Endothelial cell of umbilical vein (primary cell): ENCODE measurements at regions of chr7 and their contacts with region 1.

Region 1: DNA sequence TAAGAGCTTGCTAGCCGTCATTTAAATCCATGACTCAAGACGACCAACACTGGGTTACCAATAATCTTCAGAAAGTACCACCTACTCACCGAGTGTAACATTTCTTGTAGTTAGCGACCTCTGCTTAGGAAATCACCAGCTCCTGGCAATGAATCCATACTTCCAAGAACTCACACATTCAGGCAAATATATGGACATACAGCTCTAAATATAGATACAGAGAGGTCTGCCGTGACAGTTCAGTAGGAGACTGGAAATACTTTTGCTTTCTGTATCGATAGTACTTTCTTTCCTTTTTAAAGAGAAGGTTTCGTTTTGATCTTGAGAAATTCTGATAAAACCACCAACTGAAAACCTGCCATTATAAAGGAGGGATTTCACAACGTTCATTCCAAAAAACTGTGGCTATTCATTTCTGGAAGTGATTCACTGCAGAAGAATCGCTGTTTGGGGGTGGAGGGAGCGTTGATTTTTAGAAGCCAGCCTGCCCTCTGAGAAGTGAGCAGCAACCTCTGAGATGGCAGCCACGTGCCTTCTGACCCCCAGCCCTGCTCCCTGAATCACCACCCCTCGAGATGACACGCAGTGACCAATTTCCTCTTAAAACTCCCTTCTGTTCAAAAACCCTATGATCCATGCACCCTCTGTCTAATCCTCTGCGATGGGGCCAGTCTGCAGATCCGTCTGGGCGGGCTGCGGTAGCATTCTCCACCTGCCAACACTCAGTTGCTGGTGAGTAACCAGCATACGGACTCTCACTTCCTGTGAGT is 179.0 kb upstream of the KLF14 start:
- DNase-seq: peak; percentile 97
- H3K4me3 ChIP-seq: peak overlapping the region; percentile 51 to 99 (median 88)
- H3K27ac ChIP-seq: peak overlapping the region; percentile 100
- H3K4me1 ChIP-seq: peaks cover 60% of the 10 kb centered on the region
- H3K27me3 ChIP-seq: no peaks in the 10 kb centered on the region
- CTCF ChIP-seq: no peak
- POLR2A ChIP-seq: peak; percentile 48

Region 2: DNA sequence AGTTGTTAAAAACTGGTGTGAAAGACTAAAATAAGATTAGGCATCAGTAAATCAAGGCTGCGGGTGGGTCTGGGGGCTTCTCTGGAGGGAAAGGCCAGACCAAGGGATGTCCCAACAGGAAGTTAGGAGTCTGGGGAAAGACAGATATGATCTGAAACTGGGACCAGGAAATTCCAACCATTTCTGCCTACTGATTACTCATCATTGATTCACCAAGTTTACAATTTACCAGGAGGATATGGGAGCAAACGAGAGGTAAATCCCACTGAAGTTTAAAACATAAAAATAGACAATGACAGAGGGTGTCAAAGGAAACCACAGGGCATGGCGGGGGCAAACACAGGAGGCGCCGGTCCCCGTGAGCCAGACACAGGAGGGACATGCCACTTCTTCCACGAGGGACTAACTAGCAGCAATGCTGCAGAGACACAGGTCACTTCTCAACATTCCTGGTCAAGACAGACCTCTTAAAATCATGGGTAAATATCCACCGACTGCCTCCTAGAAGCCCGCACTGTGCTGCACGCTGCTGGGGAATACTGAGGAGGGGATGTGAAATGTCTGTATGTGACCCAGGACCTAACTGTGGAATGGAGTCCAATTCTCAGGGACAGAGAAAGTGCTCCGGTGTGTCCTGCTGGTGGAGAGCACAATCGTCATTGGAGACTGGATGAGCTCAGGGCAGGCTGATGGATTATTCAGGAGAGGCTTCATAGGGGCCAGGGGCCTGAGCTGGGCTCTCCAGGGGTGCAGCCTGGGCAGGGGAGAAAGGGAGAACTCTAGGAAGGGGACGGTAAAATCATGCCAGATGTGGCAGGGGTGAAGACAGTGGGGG is 25.6 kb before region 1 on chr7:
- CTCF ChIA-PET with region 1: no interaction called
- POLR2A ChIA-PET with region 1: interaction called, 4 read pairs
- dilution Hi-C with region 1: no loop called
- intact Hi-C with region 1: loop called (anchors 1 kb)
- DNase-seq: peak; percentile 89
- H3K4me3 ChIP-seq: no peak overlapping the region
- H3K27ac ChIP-seq: peak overlapping the region; percentile 98
- H3K4me1 ChIP-seq: peaks cover 74% of the 10 kb centered on the region
- H3K27me3 ChIP-seq: no peaks in the 10 kb centered on the region
- CTCF ChIP-seq: no peak
- POLR2A ChIP-seq: peak; percentile 72

Region 3: GRCh38 chr7:130941322-130942210 is 28.5 kb after region 1 on chr7:
- CTCF ChIA-PET with region 1: interaction called, 5 read pairs
- POLR2A ChIA-PET with region 1: interaction called, 4 read pairs
- dilution Hi-C with region 1: no loop called
- intact Hi-C with region 1: loop called (anchors 1 kb)
- DNase-seq: peak; percentile 55
- H3K4me3 ChIP-seq: peak overlapping the region; percentile 6 to 29 (median 25)
- H3K27ac ChIP-seq: peak overlapping the region; percentile 14
- H3K4me1 ChIP-seq: peaks cover 13% of the 10 kb centered on the region
- H3K27me3 ChIP-seq: no peaks in the 10 kb centered on the region
- CTCF ChIP-seq: no peak
- POLR2A ChIP-seq: no peak

Region 4: GRCh38 chr7:130961128-130961601 is 48.1 kb after region 1 on chr7:
- CTCF ChIA-PET with region 1: interaction called, 7 read pairs
- POLR2A ChIA-PET with region 1: interaction called, 5 read pairs
- dilution Hi-C with region 1: no loop called
- intact Hi-C with region 1: loop called (anchors 1 kb)
- DNase-seq: no peak
- H3K4me3 ChIP-seq: no peak overlapping the region
- H3K27ac ChIP-seq: peak overlapping the region; percentile 42
- H3K4me1 ChIP-seq: peaks cover 21% of the 10 kb centered on the region
- H3K27me3 ChIP-seq: no peaks in the 10 kb centered on the region
- CTCF ChIP-seq: no peak
- POLR2A ChIP-seq: no peak

Region 5: GRCh38 chr7:131007394-131008330 is 94.6 kb after region 1 on chr7:
- CTCF ChIA-PET with region 1: interaction called, 7 read pairs
- POLR2A ChIA-PET with region 1: no interaction called
- dilution Hi-C with region 1: no loop called
- intact Hi-C with region 1: loop called (anchors 1 kb)
- DNase-seq: peak; percentile 71
- H3K4me3 ChIP-seq: no peak overlapping the region
- H3K27ac ChIP-seq: peak overlapping the region; percentile 24
- H3K4me1 ChIP-seq: peaks cover 6% of the 10 kb centered on the region
- H3K27me3 ChIP-seq: no peaks in the 10 kb centered on the region
- CTCF ChIP-seq: peak; percentile 47 to 49
- POLR2A ChIP-seq: no peak